Mammary epithelial cell (primary cell): ENCODE measurements at regions of chr4 and their contacts with region 1.

Region 1: DNA sequence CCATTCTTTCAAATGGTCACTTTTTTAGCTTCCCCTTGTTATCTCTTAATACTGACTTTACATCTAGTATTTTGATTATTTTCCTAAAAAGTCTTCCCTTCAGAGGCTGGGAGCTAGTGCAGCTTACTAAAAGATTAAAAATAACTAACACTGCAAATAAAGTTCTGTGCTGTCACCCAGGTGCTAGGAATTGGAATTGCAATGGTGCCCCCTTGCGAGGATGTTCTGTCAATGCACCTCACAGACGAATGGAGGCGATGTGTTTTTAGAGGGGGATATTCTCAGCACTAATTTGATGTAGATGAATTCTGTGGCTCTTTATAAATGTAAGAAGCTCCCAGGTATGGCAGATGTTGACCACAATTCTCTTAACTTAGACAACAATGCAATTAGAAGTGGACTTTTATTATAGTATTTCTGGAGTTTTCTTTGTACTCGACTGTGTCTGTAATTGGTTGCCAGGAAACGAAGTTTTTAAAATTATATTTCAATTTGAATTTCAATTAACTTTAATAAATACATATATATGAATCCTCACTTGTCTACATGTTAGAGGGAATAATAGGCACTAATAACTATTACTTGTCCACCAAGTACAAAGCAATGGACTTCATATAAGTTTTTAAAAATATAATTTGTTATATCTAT is 22.0 kb upstream of the SMIM31 start:
- DNase-seq: peak; percentile 15
- H3K4me3 ChIP-seq: no peak overlapping the region
- H3K27ac ChIP-seq: no peak overlapping the region
- H3K4me1 ChIP-seq: no peaks in the 10 kb centered on the region
- H3K27me3 ChIP-seq: no peaks in the 10 kb centered on the region
- CTCF ChIP-seq: peak; percentile 78 to 92

Region 2: DNA sequence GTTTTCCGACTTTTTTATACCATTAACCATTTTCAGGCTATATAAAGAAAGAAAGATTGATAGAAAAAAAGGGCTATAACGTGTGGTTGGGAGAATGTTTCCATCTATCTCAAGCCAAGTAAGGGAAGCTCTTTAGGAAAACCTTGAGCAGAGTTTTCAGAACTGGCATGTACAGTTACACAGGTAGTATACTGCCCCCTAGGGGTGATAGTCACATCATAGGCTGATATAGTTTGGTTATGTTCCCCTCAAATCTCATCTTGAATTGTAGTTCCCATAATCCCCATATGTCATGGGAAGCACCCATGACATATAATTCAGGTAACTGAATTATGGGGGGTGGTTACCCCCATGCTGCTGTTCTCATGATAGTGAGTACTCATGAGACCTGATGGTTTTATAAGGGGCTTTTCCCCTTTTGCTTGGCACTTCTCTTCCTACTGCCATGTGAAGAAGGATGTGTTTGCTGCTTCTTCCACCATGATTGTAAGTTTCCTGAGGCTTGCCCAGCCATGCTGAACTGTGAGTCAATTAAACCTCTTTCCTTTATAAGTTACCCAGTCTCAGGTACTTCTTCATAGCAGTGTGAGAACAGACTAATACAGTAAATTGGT is 1050.6 kb before region 1 on chr4:
- CTCF ChIA-PET with region 1: no interaction called
- dilution Hi-C with region 1: no loop called
- in situ Hi-C with region 1: no loop called
- intact Hi-C with region 1: loop called (anchors 5 kb)
- DNase-seq: no peak
- H3K4me3 ChIP-seq: no peak overlapping the region
- H3K27ac ChIP-seq: no peak overlapping the region
- H3K4me1 ChIP-seq: no peaks in the 10 kb centered on the region
- H3K27me3 ChIP-seq: no peaks in the 10 kb centered on the region
- CTCF ChIP-seq: peak; percentile 54 to 57

Region 3: GRCh38 chr4:163755013-163755412 is 976.9 kb before region 1 on chr4:
- CTCF ChIA-PET with region 1: no interaction called
- dilution Hi-C with region 1: no loop called
- in situ Hi-C with region 1: no loop called
- intact Hi-C with region 1: loop called (anchors 5 kb)
- DNase-seq: peak; percentile 23
- H3K4me3 ChIP-seq: no peak overlapping the region
- H3K27ac ChIP-seq: no peak overlapping the region
- H3K4me1 ChIP-seq: no peaks in the 10 kb centered on the region
- H3K27me3 ChIP-seq: peaks cover 2% of the 10 kb centered on the region
- CTCF ChIP-seq: peak; percentile 47 to 60

Region 4: DNA sequence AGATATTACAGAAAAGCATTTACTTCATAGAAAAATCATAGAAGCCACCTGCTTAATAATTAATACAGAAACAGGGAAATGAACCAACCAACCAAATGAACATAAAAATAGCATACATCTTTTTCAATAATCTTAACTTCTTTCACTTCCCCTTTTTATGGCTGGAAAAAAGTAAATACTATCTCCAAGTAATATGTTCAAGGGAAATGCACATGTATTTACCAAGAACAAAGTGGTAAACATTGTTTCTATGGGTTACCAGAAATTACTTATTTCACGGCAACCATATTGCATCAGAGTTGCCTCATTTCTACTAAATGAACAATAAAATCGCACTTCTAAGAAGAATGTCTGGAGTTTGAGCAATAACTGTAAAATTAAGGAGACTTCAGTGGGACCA is 916.2 kb before region 1 on chr4:
- CTCF ChIA-PET with region 1: no interaction called
- dilution Hi-C with region 1: no loop called
- in situ Hi-C with region 1: no loop called
- intact Hi-C with region 1: loop called (anchors 5 kb)
- DNase-seq: no peak
- H3K4me3 ChIP-seq: no peak overlapping the region
- H3K27ac ChIP-seq: no peak overlapping the region
- H3K4me1 ChIP-seq: no peaks in the 10 kb centered on the region
- H3K27me3 ChIP-seq: no peaks in the 10 kb centered on the region
- CTCF ChIP-seq: no peak

Region 5: GRCh38 chr4:164012396-164013027 is 719.4 kb before region 1 on chr4:
- CTCF ChIA-PET with region 1: no interaction called
- dilution Hi-C with region 1: no loop called
- in situ Hi-C with region 1: loop called in 1 of 2 experiments (anchors 25 kb)
- intact Hi-C with region 1: loop called (anchors 5 kb)
- DNase-seq: peak; percentile 16
- H3K4me3 ChIP-seq: no peak overlapping the region
- H3K27ac ChIP-seq: no peak overlapping the region
- H3K4me1 ChIP-seq: no peaks in the 10 kb centered on the region
- H3K27me3 ChIP-seq: no peaks in the 10 kb centered on the region
- CTCF ChIP-seq: peak; percentile 50 to 64

Region 6: GRCh38 chr4:164313853-164314252 is 418.1 kb before region 1 on chr4:
- CTCF ChIA-PET with region 1: no interaction called
- dilution Hi-C with region 1: no loop called
- in situ Hi-C with region 1: no loop called
- intact Hi-C with region 1: loop called (anchors 5 kb)
- DNase-seq: no peak
- H3K4me3 ChIP-seq: no peak overlapping the region
- H3K27ac ChIP-seq: no peak overlapping the region
- H3K4me1 ChIP-seq: no peaks in the 10 kb centered on the region
- H3K27me3 ChIP-seq: no peaks in the 10 kb centered on the region
- CTCF ChIP-seq: no peak

Region 7: DNA sequence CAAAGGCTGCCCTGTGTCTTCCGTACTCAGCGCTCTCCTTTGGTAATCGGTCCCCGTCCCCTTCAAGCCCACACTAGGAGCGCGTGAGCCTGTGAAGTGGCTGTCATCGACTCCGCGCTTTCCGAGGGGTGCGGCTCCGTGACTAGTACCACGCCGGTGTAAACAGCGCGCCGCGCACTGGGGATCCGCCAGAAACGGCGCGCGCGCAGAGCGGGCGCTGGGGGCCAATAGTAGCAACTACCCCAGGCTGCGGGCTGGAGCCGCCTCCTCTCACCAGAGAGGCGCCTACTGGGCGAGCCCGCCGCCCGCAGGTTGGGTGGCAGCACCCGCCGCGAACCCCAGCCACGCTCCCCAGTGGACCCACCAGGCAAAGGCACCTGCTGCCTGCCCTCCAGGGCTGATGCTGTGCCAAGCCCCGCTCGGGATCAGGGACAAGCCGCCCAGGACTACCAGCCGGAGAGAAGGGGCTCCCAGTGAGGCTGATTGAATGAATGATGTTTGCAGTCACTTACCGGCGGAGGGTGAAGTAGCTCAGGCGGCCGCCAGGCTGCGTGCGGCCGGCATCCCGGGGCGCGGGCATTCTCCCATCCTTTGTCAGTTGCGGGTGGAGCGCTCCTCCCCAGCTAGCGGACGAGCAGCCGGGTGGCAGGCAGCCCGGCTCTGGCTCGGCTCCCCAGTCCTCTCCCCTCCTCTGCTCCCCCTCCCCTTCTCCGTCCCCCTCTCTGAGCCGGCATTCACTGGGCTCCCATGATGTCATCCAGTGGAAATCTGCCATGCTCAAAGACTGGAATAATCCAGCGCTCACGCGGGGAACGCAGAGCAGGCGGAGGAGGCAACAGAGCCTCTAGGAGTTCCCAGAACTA is 348.4 kb before region 1 on chr4:
- CTCF ChIA-PET with region 1: no interaction called
- dilution Hi-C with region 1: no loop called
- in situ Hi-C with region 1: no loop called
- intact Hi-C with region 1: loop called (anchors 5 kb)
- DNase-seq: peak; percentile 22
- H3K4me3 ChIP-seq: peak overlapping the region; percentile 33 to 49 (median 44)
- H3K27ac ChIP-seq: no peak overlapping the region
- H3K4me1 ChIP-seq: peaks cover 9% of the 10 kb centered on the region
- H3K27me3 ChIP-seq: peaks cover 23% of the 10 kb centered on the region
- CTCF ChIP-seq: peak; percentile 23 to 56

Region 8: GRCh38 chr4:164856396-164856795 is 124.4 kb after region 1 on chr4:
- CTCF ChIA-PET with region 1: no interaction called
- dilution Hi-C with region 1: no loop called
- in situ Hi-C with region 1: no loop called
- intact Hi-C with region 1: no loop called
- DNase-seq: peak; percentile 36
- H3K4me3 ChIP-seq: no peak overlapping the region
- H3K27ac ChIP-seq: no peak overlapping the region
- H3K4me1 ChIP-seq: no peaks in the 10 kb centered on the region
- H3K27me3 ChIP-seq: no peaks in the 10 kb centered on the region
- CTCF ChIP-seq: no peak